HepG2 (cell line): ENCODE measurements at regions of chr1 and their contacts with region 1.

Region 1: DNA sequence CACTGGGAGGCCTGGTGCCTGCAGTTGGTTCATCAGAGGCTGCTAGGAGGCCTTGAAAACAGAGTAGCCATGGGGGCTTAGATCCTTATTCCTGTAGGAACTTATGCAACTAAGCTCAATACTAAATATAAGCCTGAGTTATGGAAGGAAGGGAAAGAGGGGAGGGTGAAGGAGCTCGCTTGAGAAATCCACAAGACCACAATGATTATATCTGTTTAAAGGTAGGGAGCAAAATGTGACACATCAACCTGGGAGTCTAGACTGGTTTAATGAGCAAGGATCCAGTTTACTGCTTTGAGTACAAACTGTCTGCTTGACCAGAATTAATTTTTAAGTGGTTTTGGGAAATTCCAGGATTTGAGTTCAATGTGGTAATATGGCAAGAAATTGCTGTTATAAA is 20.4 kb upstream of the ANGPTL7 start:
- DNase-seq: no peak
- ATAC-seq: no peak
- H3K4me3 ChIP-seq: no peak overlapping the region
- H3K27ac ChIP-seq: no peak overlapping the region
- H3K4me1 ChIP-seq: no peaks in the 10 kb centered on the region
- H3K27me3 ChIP-seq: no peaks in the 10 kb centered on the region
- CTCF ChIP-seq: no peak
- EP300 ChIP-seq: no peak
- POLR2A ChIP-seq: no peak
- RAD21 ChIP-seq: no peak

Region 2: DNA sequence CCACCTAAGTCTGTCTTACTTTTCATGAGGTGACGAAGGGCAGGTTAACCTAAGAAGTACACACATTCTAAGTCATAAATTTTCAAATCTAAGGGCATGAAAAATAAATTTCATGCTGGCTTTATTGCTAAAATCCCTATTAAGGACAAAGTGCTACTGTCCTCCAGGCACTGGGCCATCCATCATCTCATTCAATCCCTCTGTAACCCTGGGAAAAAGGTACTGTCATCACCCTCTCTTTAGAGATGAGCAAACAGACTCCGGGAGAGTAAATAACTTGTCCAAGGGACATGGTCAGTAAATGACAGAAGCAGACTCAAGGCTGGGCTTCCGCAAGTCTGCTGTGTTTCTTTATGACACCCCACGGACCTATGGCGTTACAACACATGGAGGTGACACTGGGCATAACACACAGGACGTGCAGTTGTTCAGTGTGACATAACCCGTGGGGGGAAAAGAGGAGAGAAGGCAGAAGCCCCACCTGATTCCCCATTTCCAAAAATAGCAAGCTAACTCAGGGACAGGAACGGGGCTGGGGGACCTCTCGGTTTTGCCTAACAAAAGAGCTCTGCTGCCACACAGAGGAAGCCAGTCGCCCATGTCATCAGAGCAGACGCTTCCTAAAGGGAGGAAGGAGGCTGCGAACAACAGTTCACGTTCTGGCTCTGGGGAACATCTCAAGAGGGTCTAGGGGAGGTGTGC is 96.4 kb before region 1 on chr1:
- CTCF ChIA-PET with region 1: no interaction called
- POLR2A ChIA-PET with region 1: no interaction called
- in situ Hi-C with region 1: no loop called
- intact Hi-C with region 1: no loop called
- DNase-seq: no peak
- ATAC-seq: no peak
- H3K4me3 ChIP-seq: no peak overlapping the region
- H3K27ac ChIP-seq: no peak overlapping the region
- H3K4me1 ChIP-seq: no peaks in the 10 kb centered on the region
- H3K27me3 ChIP-seq: no peaks in the 10 kb centered on the region
- CTCF ChIP-seq: no peak
- EP300 ChIP-seq: no peak
- POLR2A ChIP-seq: no peak
- RAD21 ChIP-seq: no peak

Region 3: GRCh38 chr1:11138952-11139351 is 29.8 kb before region 1 on chr1:
- CTCF ChIA-PET with region 1: no interaction called
- POLR2A ChIA-PET with region 1: no interaction called
- in situ Hi-C with region 1: no loop called
- intact Hi-C with region 1: no loop called
- DNase-seq: no peak
- ATAC-seq: no peak
- H3K4me3 ChIP-seq: no peak overlapping the region
- H3K27ac ChIP-seq: no peak overlapping the region
- H3K4me1 ChIP-seq: no peaks in the 10 kb centered on the region
- H3K27me3 ChIP-seq: no peaks in the 10 kb centered on the region; a peak in 1 of 5 replicates
- CTCF ChIP-seq: no peak
- EP300 ChIP-seq: no peak
- POLR2A ChIP-seq: no peak
- RAD21 ChIP-seq: no peak

Region 4: GRCh38 chr1:11184973-11185372 is 16.2 kb after region 1 on chr1:
- CTCF ChIA-PET with region 1: no interaction called
- POLR2A ChIA-PET with region 1: no interaction called
- in situ Hi-C with region 1: no loop called
- intact Hi-C with region 1: loop called (anchors 1 kb)
- DNase-seq: no peak
- ATAC-seq: no peak
- H3K4me3 ChIP-seq: no peak overlapping the region
- H3K27ac ChIP-seq: no peak overlapping the region
- H3K4me1 ChIP-seq: peaks cover 2% of the 10 kb centered on the region; the same call in 1 of the 2 replicates
- H3K27me3 ChIP-seq: no peaks in the 10 kb centered on the region
- CTCF ChIP-seq: no peak
- EP300 ChIP-seq: no peak
- POLR2A ChIP-seq: no peak
- RAD21 ChIP-seq: no peak